ENCODE measurements at regions of chr14 and their contacts with region 1.

Region 1: DNA sequence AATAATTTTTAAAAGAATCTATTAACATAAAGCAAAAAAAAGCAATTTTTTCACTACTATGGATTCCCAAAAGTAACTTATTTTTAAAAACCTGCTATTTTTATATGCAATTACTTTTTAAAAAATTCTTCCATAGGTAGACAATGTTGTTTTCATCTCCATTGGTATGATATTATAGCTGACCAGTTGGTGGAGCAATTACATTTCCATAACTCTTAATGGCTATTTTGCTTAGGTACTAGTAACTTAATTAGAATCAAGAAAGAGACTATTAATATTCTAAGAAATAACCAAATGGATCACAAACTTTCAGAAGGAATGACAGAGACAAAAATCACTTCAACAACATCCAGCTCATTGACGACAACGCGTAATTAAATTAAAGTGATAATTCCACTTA is 64.7 kb upstream of the PTCSC3 start:
- DNase-seq: no peak
- H3K4me3 Mint-ChIP-seq: no peak overlapping the region
- H3K27ac Mint-ChIP-seq: no peak overlapping the region
- H3K4me1 Mint-ChIP-seq: no peaks in the 10 kb centered on the region
- H3K27me3 Mint-ChIP-seq: peaks cover 20% of the 10 kb centered on the region

Region 2: DNA sequence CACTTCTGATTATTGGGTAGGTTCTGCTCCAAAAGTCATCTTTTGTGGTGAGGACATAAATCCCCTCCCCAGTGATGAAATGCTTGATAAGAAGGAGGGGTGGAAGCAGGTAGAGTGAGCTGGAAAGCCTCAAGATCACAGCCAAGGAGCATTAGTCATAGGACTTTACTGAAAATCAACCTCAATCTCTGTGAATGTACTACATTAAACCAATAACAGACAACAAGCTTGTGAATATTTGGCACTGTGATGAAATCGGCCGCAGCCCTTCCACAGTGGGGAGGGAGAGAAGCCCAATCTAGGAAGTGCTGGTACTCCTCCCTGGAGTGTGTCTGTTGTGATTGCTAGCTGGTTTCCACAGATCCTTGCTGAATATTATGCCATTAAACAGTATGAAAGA is 23.5 kb before region 1 on chr14:
- CTCF ChIA-PET with region 1: no interaction called
- intact Hi-C with region 1: no loop called
- DNase-seq: peak; percentile 7
- H3K4me3 Mint-ChIP-seq: no peak overlapping the region
- H3K27ac Mint-ChIP-seq: no peak overlapping the region
- H3K4me1 Mint-ChIP-seq: no peaks in the 10 kb centered on the region
- H3K27me3 Mint-ChIP-seq: peaks cover 20% of the 10 kb centered on the region

Region 3: GRCh38 chr14:36604757-36605505 is 363.7 kb after region 1 on chr14:
- CTCF ChIA-PET with region 1: no interaction called
- intact Hi-C with region 1: loop called (anchors 10 kb)
- DNase-seq: peak; percentile 69
- H3K4me3 Mint-ChIP-seq: no peak overlapping the region
- H3K27ac Mint-ChIP-seq: no peak overlapping the region
- H3K4me1 Mint-ChIP-seq: no peaks in the 10 kb centered on the region
- H3K27me3 Mint-ChIP-seq: peaks cover 13% of the 10 kb centered on the region